ENCODE measurements at regions of chr2 and their contacts with region 1.

Region 1: GRCh38 chr2:208265801-208266552 is at the start of gene PIKFYVE:
- DNase-seq: peak; percentile 66 to 94 (median 83)
- ATAC-seq: peak; percentile 74
- H3K4me3 ChIP-seq: peak within 1 kb of the TSS; percentile 90
- H3K4me3 Mint-ChIP-seq: peak within 1 kb of the TSS; percentile 96
- H3K27ac ChIP-seq: peak within 1 kb of the TSS; percentile 54 to 83
- H3K27ac Mint-ChIP-seq: peak within 1 kb of the TSS; percentile 96
- H3K4me1 ChIP-seq: peaks cover 23% of the 10 kb centered on the region
- H3K4me1 Mint-ChIP-seq: peaks cover 55% of the 10 kb centered on the region
- H3K27me3 ChIP-seq: no peaks in the 10 kb centered on the region
- H3K27me3 Mint-ChIP-seq: no peaks in the 10 kb centered on the region
- CTCF ChIP-seq: no peak
- total RNA-seq, gene PIKFYVE: 29.3 to 29.9 TPM

Region 2: GRCh38 chr2:206274434-206275268 is 1991.3 kb before region 1 on chr2 and contains the start of gene ZDBF2:
- CTCF ChIA-PET with region 1: no interaction called
- POLR2A ChIA-PET with region 1: no interaction called
- intact Hi-C with region 1: loop called in 1 of 2 experiments (anchors 10 kb)
- DNase-seq: peak in 13 of 14 experiments; percentile 12 to 77 (median 47)
- ATAC-seq: peak; percentile 67
- H3K4me3 ChIP-seq: peak within 1 kb of the TSS; percentile 65
- H3K4me3 Mint-ChIP-seq: peak within 1 kb of the TSS; percentile 92
- H3K27ac ChIP-seq: peak within 1 kb of the TSS in 1 of 2 donors; percentile 38
- H3K27ac Mint-ChIP-seq: peak within 1 kb of the TSS; percentile 89
- H3K4me1 ChIP-seq: peaks cover 15% of the 10 kb centered on the region
- H3K4me1 Mint-ChIP-seq: peaks cover 25% of the 10 kb centered on the region
- H3K27me3 ChIP-seq: peaks cover 36 to 37% of the 10 kb centered on the region in 2 experiments
- H3K27me3 Mint-ChIP-seq: peaks cover 71% of the 10 kb centered on the region
- CTCF ChIP-seq: no peak
- total RNA-seq, gene ZDBF2: 28.7 to 29.7 TPM

Region 3: GRCh38 chr2:208175069-208175839 is 90.7 kb before region 1 on chr2:
- CTCF ChIA-PET with region 1: no interaction called
- POLR2A ChIA-PET with region 1: no interaction called
- intact Hi-C with region 1: loop called in 1 of 2 experiments (anchors 5 kb)
- DNase-seq: peak; percentile 27 to 75 (median 46)
- ATAC-seq: peak; percentile 99
- H3K4me3 ChIP-seq: no peak overlapping the region
- H3K4me3 Mint-ChIP-seq: no peak overlapping the region
- H3K27ac ChIP-seq: no peak overlapping the region
- H3K27ac Mint-ChIP-seq: no peak overlapping the region
- H3K4me1 ChIP-seq: no peaks in the 10 kb centered on the region
- H3K4me1 Mint-ChIP-seq: peaks cover 5% of the 10 kb centered on the region
- H3K27me3 ChIP-seq: peaks cover 0 to 15% of the 10 kb centered on the region in 2 experiments
- H3K27me3 Mint-ChIP-seq: peaks cover 12% of the 10 kb centered on the region
- CTCF ChIP-seq: peak; percentile 86

Measured in CD4-positive, alpha-beta T cell (primary cell).